GM10248 (cell line): ENCODE measurements at regions of chr5 and their contacts with region 1.

Region 1: DNA sequence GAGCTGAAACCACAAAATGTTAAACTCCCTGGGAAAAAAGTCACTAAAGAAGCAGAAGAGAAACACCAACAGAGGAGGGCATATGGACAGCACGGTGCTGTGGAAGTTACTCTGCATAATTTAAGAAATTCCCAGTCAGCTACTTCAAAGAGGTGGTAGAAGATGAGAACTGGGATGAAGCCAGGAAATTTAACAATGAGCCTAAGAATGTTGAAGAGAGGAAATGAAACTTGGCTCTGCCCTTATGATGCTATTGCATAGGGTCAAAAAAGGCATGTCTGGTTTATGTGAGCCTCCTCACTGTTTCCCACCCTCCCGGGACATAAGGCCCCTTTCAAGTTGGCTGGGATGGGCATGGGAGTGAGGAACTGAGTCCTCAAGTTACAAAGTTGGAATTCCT is 25.4 kb upstream of the SNX18 start:
- DNase-seq: no peak
- CTCF ChIP-seq: no peak

Region 2: GRCh38 chr5:54229041-54229780 is 263.0 kb before region 1 on chr5:
- CTCF ChIA-PET with region 1: interaction called, 10 read pairs
- POLR2A ChIA-PET with region 1: no interaction called
- DNase-seq: peak; percentile 51
- CTCF ChIP-seq: peak; percentile 91

Region 3: DNA sequence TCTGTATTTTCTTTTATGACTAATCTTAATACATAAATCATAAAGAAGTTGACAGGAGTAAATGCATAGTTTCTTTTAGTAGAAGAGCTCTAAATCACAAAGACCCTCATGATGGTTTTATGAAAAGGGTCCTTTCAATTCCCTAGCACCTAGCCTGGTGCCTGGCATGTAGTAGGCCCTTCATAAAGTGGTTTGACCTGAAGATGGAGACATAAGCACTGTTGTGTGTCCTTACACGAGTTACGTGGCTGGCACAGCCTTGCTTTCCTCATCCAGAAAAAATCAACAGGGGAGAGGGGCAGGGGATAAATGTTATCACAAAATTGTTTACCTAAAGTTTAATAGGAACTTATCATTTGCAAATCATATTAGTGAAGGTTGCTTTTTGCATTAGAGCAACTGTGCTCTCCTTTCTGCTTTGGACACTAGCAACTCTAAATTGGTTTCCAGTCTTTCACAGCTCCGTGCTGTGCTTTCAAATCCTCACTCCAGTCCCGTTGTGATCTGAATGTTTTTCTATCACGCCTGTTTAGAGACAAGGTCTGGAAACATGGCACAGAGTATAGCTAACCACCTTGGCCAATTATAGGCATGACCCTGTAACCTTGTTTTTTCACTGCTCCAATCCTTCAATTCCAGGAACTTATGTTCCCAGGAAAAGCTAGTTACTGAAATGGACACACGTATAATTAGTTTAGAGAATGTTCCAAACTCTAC is 237.5 kb before region 1 on chr5:
- CTCF ChIA-PET with region 1: interaction called, 12 read pairs
- POLR2A ChIA-PET with region 1: no interaction called
- DNase-seq: no peak
- CTCF ChIP-seq: no peak

Region 4: DNA sequence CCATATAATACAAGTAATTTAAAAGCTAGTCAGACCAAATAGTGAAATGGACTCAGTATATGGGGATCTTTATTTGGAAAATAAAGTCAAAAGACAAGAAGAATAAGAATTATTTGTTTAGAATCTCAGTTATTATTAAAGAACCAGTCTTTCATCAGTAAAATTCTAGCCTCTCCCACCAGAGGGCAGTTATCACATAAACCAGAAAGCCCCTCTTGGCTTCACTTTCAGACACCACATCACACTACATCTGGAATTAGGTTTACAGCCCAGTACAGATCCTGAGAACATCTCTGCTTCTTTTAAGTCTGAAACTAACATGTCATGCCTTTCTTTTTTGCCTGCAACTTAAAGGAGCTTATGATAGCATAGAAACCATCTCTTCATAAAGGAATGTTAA is 48.9 kb before region 1 on chr5:
- CTCF ChIA-PET with region 1: interaction called, 26 read pairs
- POLR2A ChIA-PET with region 1: no interaction called
- DNase-seq: peak; percentile 37
- CTCF ChIP-seq: peak; percentile 22

Region 5: GRCh38 chr5:54469622-54470021 is 22.6 kb before region 1 on chr5:
- CTCF ChIA-PET with region 1: interaction called, 22 read pairs
- POLR2A ChIA-PET with region 1: no interaction called
- DNase-seq: peak; percentile 29
- CTCF ChIP-seq: no peak

Region 6: GRCh38 chr5:54517174-54518092 is 25.3 kb after region 1 on chr5 and contains the start of gene SNX18:
- CTCF ChIA-PET with region 1: interaction called, 30 read pairs
- POLR2A ChIA-PET with region 1: no interaction called
- DNase-seq: peak; percentile 95
- CTCF ChIP-seq: peak; percentile 94